Heart right ventricle (tissue), 16 donors: ENCODE measurements at regions of chr20 and their contacts with region 1.

Region 1: GRCh38 chr20:62136283-62137091 is 6.7 kb downstream of the PSMA7 start:
- DNase-seq: peak; percentile 56 to 63
- ATAC-seq: peak in 4 of 8 donors; percentile 28 to 48 (median 42)
- H3K4me3 ChIP-seq: no peak overlapping the region
- H3K27ac ChIP-seq: no peak overlapping the region
- H3K4me1 ChIP-seq: peaks cover 26 to 59% (median 49%) of the 10 kb centered on the region in 9 donors
- H3K27me3 ChIP-seq: no peaks in the 10 kb centered on the region
- CTCF ChIP-seq: peak; percentile 29 to 86 (median 79)

Region 2: GRCh38 chr20:61998343-61999121 is 138.0 kb before region 1 on chr20:
- intact Hi-C with region 1: no loop called
- DNase-seq: no peak
- ATAC-seq: peak in 1 of 8 donors; percentile 20
- H3K4me3 ChIP-seq: no peak overlapping the region
- H3K27ac ChIP-seq: no peak overlapping the region
- H3K4me1 ChIP-seq: no peaks in the 10 kb centered on the region
- H3K27me3 ChIP-seq: no peaks in the 10 kb centered on the region
- CTCF ChIP-seq: no peak

Region 3: GRCh38 chr20:62043131-62043914 is 93.2 kb before region 1 on chr20:
- intact Hi-C with region 1: no loop called
- DNase-seq: peak in 1 of 2 donors; percentile 2
- ATAC-seq: no peak
- H3K4me3 ChIP-seq: no peak overlapping the region
- H3K27ac ChIP-seq: no peak overlapping the region
- H3K4me1 ChIP-seq: peaks cover 0 to 17% (median 7%) of the 10 kb centered on the region in 9 donors
- H3K27me3 ChIP-seq: no peaks in the 10 kb centered on the region
- CTCF ChIP-seq: no peak

Region 4: GRCh38 chr20:62121776-62122631 is 14.5 kb before region 1 on chr20 and contains the start of gene LSM14B:
- intact Hi-C with region 1: loop called in 1 of 10 experiments (anchors 2 kb)
- DNase-seq: peak; percentile 95 to 98
- ATAC-seq: peak; percentile 86 to 94 (median 90)
- H3K4me3 ChIP-seq: peak within 1 kb of the TSS; percentile 65 to 94 (median 81)
- H3K27ac ChIP-seq: peak within 1 kb of the TSS; percentile 85 to 99 (median 94)
- H3K4me1 ChIP-seq: peaks cover 5 to 57% (median 41%) of the 10 kb centered on the region in 9 donors
- H3K27me3 ChIP-seq: peaks cover 0 to 15% (median 11%) of the 10 kb centered on the region in 7 donors
- CTCF ChIP-seq: no peak
- total RNA-seq, gene LSM14B: 50.8 to 63.7 (median 60.5) TPM